Activated T-helper 1 cell treated with anti-CD3 and anti-CD28 coated beads, Interleukin-12 subunit alpha, Interleukin-12 subunit beta, Interleukin-2, Interleukin-4 antibody, amounts not matched to agents 30 ng/mL and 10 ng/mL and 1 ng/mL, durations not matched to agents 14 hours and 24 hours and 36 hours (primary cell): ENCODE measurements at regions of chr7 and their contacts with region 1.

Region 1: DNA sequence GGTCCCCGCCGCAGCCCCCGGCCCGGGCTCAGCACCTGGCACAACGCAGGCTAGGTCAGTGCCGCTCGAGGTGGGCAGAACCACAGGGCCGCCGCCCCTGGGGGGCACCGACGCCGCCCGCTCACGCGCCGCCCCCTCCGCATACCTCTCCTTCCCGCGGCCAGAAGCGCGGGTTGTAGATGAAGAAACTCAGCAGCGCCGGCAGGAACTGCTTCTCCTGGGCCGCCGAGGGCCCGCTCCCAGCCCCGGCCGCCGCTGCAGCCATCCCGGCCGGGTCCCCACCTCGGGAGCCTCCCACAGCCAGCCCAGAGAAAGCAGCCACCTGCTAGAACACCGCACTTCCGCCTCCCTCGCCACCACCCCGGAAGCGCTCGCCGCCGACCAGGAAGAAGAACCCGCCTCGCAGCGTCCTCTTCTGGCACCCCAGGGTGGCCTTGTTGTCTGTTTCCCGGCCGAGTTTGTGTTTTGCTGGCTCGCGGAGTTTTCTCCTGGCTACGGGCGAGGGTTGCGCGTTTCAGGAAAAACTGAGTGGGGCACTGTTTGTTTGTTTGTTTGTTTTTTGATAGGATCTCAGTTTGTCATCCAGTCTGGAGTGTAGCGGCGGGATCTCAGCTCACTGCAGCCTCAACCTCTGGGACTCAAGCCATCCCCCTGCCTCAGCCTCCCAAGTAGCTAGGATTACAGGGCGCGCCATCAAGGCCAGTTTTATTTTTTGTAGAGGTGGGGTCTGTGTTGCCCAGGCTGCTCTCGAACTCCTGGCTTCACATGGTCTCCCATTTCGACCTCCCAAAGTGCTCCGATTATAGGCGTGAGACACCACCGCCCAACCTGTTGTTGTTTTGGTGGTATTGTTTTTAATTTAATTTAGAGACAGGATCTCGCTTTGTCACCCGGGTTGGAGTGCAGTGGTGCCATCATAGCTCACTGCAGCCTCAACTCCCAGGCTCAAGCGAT is 17.7 kb downstream of the OCM2 start:
- DNase-seq: peak; percentile 80
- H3K4me3 Mint-ChIP-seq: peak overlapping the region; percentile 99
- H3K27ac Mint-ChIP-seq: peak overlapping the region; percentile 94
- H3K4me1 Mint-ChIP-seq: peaks cover 13% of the 10 kb centered on the region
- H3K27me3 Mint-ChIP-seq: peaks cover 4% of the 10 kb centered on the region

Region 2: GRCh38 chr7:98040626-98041360 is 68.5 kb after region 1 on chr7:
- intact Hi-C with region 1: no loop called
- DNase-seq: no peak
- H3K4me3 Mint-ChIP-seq: no peak overlapping the region
- H3K27ac Mint-ChIP-seq: no peak overlapping the region
- H3K4me1 Mint-ChIP-seq: no peaks in the 10 kb centered on the region
- H3K27me3 Mint-ChIP-seq: peaks cover 3% of the 10 kb centered on the region

Region 3: DNA sequence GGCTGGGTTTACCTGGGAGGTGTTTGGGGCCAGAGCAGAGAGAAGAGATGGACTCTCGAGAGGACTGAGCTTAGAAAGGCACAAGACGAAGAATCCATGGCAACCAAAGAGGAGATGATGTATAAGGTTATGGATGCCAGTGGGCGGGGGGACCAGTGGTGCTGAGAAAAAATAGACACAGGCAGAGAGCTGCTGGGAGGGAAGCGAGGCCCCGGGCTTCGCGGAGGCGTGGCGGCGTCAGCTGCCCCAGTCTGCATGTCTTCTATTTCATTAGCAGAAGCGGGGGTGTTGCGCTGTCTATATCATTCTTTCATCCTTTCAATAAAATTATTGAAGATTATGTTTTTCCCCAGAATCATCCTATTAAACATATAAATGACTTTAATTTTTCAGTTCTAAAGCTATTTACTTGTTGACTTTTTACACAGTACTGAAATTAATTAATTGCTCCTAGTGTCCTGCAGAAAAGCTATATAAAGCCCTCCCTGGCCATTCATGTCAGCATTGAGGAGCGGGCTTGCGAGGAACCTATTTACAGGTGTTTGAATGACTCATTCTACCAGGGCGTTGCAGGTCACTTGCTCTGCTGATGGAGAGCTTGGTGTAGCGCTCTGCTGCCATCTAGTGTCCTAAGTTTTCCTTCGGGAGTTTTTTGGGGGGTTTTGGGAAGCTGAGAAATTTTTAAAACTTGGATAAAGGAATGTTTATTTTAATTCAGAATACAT is 196.1 kb after region 1 on chr7:
- intact Hi-C with region 1: loop called (anchors 5 kb)
- DNase-seq: peak; percentile 49
- H3K4me3 Mint-ChIP-seq: no peak overlapping the region
- H3K27ac Mint-ChIP-seq: no peak overlapping the region
- H3K4me1 Mint-ChIP-seq: no peaks in the 10 kb centered on the region
- H3K27me3 Mint-ChIP-seq: no peaks in the 10 kb centered on the region

Region 4: GRCh38 chr7:98202367-98203195 is 230.3 kb after region 1 on chr7:
- intact Hi-C with region 1: loop called (anchors 5 kb)
- DNase-seq: peak; percentile 61
- H3K4me3 Mint-ChIP-seq: peak overlapping the region; percentile 56
- H3K27ac Mint-ChIP-seq: peak overlapping the region; percentile 32
- H3K4me1 Mint-ChIP-seq: peaks cover 38% of the 10 kb centered on the region
- H3K27me3 Mint-ChIP-seq: no peaks in the 10 kb centered on the region

Region 5: DNA sequence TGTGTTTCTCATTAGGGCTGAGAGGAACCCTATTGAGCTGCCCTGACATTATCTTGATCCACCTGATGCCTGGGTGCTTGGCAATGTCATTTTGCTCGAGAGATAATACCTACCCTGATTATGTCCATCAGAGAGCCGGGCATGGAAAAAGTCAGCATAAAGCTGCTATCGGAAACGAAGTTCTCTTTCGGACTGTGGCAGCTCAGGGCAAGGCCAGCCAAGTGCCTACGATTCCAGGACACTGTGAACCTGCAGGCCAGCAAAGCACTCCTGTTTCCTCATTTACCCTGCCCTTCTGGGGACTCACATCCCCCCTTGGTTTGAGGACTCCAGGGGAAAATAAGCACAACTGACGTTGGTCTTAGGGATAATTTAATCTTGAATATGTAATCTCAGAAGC is 619.7 kb after region 1 on chr7:
- intact Hi-C with region 1: no loop called
- DNase-seq: no peak
- H3K4me3 Mint-ChIP-seq: no peak overlapping the region
- H3K27ac Mint-ChIP-seq: no peak overlapping the region
- H3K4me1 Mint-ChIP-seq: no peaks in the 10 kb centered on the region
- H3K27me3 Mint-ChIP-seq: no peaks in the 10 kb centered on the region

Region 6: GRCh38 chr7:98878365-98879165 is 906.3 kb after region 1 on chr7 and contains the start of gene TRRAP:
- intact Hi-C with region 1: loop called (anchors 2 kb)
- DNase-seq: peak; percentile 70
- H3K4me3 Mint-ChIP-seq: peak within 1 kb of the TSS; percentile 95
- H3K27ac Mint-ChIP-seq: peak within 1 kb of the TSS; percentile 92
- H3K4me1 Mint-ChIP-seq: peaks cover 13% of the 10 kb centered on the region
- H3K27me3 Mint-ChIP-seq: peaks cover 10% of the 10 kb centered on the region
- total RNA-seq, gene TRRAP: 66.9 and 69.6 TPM in 2 replicates